ENCODE measurements at regions of chr4 and their contacts with region 1.

Region 1: DNA sequence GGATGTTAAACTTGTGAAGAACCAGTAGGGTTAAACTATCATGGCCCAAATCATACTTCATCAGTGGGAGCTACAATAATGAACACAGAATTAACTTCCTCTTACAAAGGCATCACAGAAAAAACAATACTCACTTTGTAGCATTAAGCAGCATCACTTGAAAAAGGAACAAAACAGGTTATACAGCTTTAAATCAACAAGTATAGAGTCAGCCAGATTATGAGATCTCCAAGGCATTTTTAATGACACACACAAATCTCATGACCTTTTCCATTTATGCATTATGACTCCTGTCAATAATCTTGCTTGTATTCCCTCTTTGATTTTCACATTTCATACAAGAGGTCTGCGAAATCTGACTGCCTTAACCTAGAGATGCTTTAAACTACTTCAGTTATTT is 18.3 kb downstream of the FBXL5 start:
- DNase-seq: no peak

Region 2: GRCh38 chr4:15675356-15675755 is 38.5 kb after region 1 on chr4:
- CTCF ChIA-PET with region 1: interaction called, 11 read pairs
- POLR2A ChIA-PET with region 1: no interaction called
- DNase-seq: no peak